ENCODE measurements at regions of chr5 and their contacts with region 1.

Region 1: GRCh38 chr5:59039296-59040023 is 456.6 kb downstream of the RAB3C start:
- DNase-seq: peak; percentile 76
- ATAC-seq: peak; percentile 64
- H3K4me3 ChIP-seq: peak overlapping the region; percentile 99
- H3K27ac ChIP-seq: peak overlapping the region; percentile 98
- H3K4me1 ChIP-seq: peaks cover 9% of the 10 kb centered on the region
- H3K27me3 ChIP-seq: no peaks in the 10 kb centered on the region
- CTCF ChIP-seq: no peak
- POLR2A ChIP-seq: peak; percentile 74
- RAD21 ChIP-seq: peak; percentile 24

Region 2: GRCh38 chr5:58983526-58984452 is 55.7 kb before region 1 on chr5:
- CTCF ChIA-PET with region 1: no interaction called
- POLR2A ChIA-PET with region 1: no interaction called
- dilution Hi-C with region 1: no loop called
- in situ Hi-C with region 1: no loop called
- intact Hi-C with region 1: no loop called
- DNase-seq: peak; percentile 14
- ATAC-seq: no peak
- H3K4me3 ChIP-seq: no peak overlapping the region
- H3K27ac ChIP-seq: no peak overlapping the region
- H3K4me1 ChIP-seq: peaks cover 2% of the 10 kb centered on the region; the same call in 1 of the 2 replicates
- H3K27me3 ChIP-seq: no peaks in the 10 kb centered on the region
- CTCF ChIP-seq: no peak
- POLR2A ChIP-seq: no peak
- RAD21 ChIP-seq: no peak

Region 3: GRCh38 chr5:59062986-59063683 is 23.7 kb after region 1 on chr5:
- CTCF ChIA-PET with region 1: interaction called, 5 read pairs
- POLR2A ChIA-PET with region 1: no interaction called
- dilution Hi-C with region 1: no loop called
- in situ Hi-C with region 1: no loop called
- intact Hi-C with region 1: loop called (anchors 2 kb)
- DNase-seq: no peak
- ATAC-seq: no peak
- H3K4me3 ChIP-seq: no peak overlapping the region
- H3K27ac ChIP-seq: no peak overlapping the region
- H3K4me1 ChIP-seq: peaks cover 14% of the 10 kb centered on the region
- H3K27me3 ChIP-seq: no peaks in the 10 kb centered on the region
- CTCF ChIP-seq: no peak
- POLR2A ChIP-seq: no peak
- RAD21 ChIP-seq: no peak

Region 4: DNA sequence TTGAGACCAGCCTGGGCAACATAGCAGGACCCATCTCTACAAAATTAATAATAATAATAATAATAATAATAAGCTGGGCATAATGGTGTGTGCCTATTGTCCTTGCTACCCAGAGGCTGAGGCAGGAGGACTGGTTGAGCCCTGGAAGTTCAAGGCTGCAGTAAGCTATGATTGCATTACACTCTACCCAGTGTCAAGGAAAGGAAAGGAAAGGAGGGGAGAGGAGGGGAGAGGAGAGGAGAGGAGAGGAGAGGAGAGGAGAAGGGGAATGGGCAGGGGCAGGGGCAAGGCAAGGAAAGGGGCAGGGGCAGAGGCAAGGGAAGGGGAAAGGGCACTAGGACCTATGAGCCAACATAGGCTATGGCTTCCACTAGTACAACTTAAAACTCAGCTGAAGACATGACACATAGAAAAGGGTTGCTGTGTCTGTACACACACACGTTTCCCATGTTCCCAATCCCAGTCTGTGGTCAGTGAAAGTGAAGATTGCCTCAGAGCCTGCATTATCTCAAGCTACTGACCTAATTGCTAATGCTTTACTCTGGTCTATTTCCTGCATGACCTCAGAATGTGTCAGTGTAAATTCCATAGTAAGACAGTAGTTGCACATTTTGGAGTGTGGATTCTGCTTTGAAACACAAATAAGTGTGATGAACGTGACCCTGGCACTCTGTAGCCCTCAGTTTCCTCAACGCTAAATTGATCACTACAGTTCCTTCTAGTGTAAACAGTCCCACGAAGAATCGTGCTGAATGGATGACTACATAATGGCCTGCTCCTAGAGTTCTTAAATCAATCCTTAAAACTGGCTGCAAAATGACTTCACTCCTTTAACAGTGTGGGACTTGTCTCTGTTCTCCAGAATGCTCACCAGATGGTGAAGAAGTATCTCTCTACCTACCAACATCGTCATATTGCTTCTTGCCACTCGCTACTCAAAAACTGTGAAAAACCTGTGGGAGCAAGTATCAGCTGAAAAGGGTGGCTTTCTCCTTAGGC is 40.5 kb after region 1 on chr5:
- CTCF ChIA-PET with region 1: no interaction called
- POLR2A ChIA-PET with region 1: no interaction called
- dilution Hi-C with region 1: no loop called
- in situ Hi-C with region 1: no loop called
- intact Hi-C with region 1: loop called (anchors 5 kb)
- DNase-seq: peak; percentile 100
- ATAC-seq: peak; percentile 98
- H3K4me3 ChIP-seq: no peak overlapping the region
- H3K27ac ChIP-seq: peak overlapping the region; percentile 56
- H3K4me1 ChIP-seq: peaks cover 5% of the 10 kb centered on the region
- H3K27me3 ChIP-seq: no peaks in the 10 kb centered on the region
- CTCF ChIP-seq: no peak
- POLR2A ChIP-seq: no peak; the same call in 1 of the 2 replicates
- RAD21 ChIP-seq: peak; percentile 10

Region 5: DNA sequence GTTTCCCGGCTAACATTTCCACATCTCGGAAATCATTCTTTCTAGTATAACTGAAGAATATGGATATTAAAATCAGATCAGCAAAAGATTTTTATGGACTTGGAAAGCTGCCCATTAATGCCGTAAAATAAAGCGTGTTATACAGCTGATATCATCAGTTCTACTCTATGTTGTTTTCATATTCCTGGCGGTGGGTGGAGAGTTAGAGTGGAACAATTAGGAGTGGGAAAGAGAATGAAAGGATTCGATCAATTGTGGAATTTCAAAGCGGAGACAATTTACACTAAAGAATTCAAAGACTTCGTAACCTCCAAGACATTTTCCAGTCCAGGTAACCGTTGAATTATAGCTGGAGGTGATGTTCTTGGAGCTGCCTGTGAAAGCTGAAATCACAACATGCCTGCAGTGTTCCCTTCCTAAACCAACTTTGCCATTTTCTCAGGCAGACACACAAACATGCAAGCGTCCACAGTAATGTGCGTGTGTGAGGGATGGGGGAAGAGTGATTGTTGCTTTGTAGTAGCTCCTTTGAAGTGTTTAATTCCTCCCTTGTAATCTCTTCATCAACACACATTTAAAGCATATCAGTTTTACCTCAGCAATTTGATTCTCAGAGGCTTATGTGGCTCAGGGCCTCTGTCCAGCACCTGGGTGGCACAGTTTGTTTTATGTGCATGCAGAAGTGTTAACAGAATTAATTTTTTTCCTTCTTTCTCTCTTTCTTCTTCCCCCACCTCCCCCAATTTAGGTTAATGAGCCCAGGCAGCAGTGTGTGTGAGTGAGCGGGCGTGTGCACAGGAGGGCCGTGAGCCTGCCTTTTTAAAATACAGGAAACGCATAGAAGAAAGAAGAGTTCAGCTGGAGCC is 87.5 kb after region 1 on chr5:
- CTCF ChIA-PET with region 1: interaction called, 3 read pairs
- POLR2A ChIA-PET with region 1: interaction called, 3 read pairs
- dilution Hi-C with region 1: no loop called
- in situ Hi-C with region 1: no loop called
- intact Hi-C with region 1: loop called (anchors 1 kb)
- DNase-seq: peak; percentile 55
- ATAC-seq: peak; percentile 1
- H3K4me3 ChIP-seq: no peak overlapping the region
- H3K27ac ChIP-seq: peak overlapping the region; percentile 99
- H3K4me1 ChIP-seq: peaks cover 20% of the 10 kb centered on the region
- H3K27me3 ChIP-seq: no peaks in the 10 kb centered on the region
- CTCF ChIP-seq: no peak
- POLR2A ChIP-seq: no peak; the same call in 1 of the 2 replicates
- RAD21 ChIP-seq: no peak

Region 6: GRCh38 chr5:59164041-59164830 is 124.8 kb after region 1 on chr5:
- CTCF ChIA-PET with region 1: interaction called, 4 read pairs
- POLR2A ChIA-PET with region 1: no interaction called
- dilution Hi-C with region 1: no loop called
- in situ Hi-C with region 1: no loop called
- intact Hi-C with region 1: loop called (anchors 2 kb)
- DNase-seq: peak; percentile 86
- ATAC-seq: peak; percentile 90
- H3K4me3 ChIP-seq: no peak overlapping the region
- H3K27ac ChIP-seq: peak overlapping the region; percentile 97
- H3K4me1 ChIP-seq: peaks cover 4% of the 10 kb centered on the region
- H3K27me3 ChIP-seq: no peaks in the 10 kb centered on the region
- CTCF ChIP-seq: no peak
- POLR2A ChIP-seq: no peak
- RAD21 ChIP-seq: no peak

Region 7: DNA sequence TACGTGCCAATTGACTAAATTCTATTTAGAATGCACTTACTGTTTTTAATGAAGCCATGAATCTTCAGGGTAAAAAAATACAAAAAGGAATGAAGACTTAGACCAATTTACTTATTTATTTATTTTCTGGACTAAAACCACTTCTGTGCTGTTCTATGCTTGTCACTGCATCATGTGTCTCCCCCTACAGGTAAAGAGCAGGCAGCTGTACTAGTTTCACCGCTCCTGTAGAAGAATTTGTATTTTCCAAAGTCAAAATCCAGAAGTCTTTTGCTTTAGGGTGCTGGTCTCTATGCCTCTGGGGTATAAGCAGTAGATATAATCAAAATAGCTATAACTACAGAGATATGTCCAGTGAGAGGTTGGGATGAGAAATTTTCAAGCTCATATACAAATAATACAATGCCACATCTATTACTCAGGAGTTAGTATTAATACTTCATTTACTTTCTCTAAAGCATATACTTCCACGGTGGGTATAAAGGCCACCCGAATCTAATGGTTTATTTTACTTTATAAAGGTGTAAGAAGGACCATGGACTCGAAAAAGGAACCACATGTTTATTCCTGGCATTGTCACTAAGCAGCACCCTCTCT is 134.9 kb after region 1 on chr5:
- CTCF ChIA-PET with region 1: interaction called, 10 read pairs
- POLR2A ChIA-PET with region 1: no interaction called
- dilution Hi-C with region 1: no loop called
- in situ Hi-C with region 1: loop called (anchors 5 kb)
- intact Hi-C with region 1: loop called (anchors 1 kb)
- DNase-seq: peak; percentile 87
- ATAC-seq: peak; percentile 96
- H3K4me3 ChIP-seq: no peak overlapping the region
- H3K27ac ChIP-seq: no peak overlapping the region
- H3K4me1 ChIP-seq: no peaks in the 10 kb centered on the region
- H3K27me3 ChIP-seq: no peaks in the 10 kb centered on the region
- CTCF ChIP-seq: peak; percentile 98
- POLR2A ChIP-seq: peak; percentile 37; the same call in 1 of the 2 replicates
- RAD21 ChIP-seq: peak; percentile 97

Region 8: DNA sequence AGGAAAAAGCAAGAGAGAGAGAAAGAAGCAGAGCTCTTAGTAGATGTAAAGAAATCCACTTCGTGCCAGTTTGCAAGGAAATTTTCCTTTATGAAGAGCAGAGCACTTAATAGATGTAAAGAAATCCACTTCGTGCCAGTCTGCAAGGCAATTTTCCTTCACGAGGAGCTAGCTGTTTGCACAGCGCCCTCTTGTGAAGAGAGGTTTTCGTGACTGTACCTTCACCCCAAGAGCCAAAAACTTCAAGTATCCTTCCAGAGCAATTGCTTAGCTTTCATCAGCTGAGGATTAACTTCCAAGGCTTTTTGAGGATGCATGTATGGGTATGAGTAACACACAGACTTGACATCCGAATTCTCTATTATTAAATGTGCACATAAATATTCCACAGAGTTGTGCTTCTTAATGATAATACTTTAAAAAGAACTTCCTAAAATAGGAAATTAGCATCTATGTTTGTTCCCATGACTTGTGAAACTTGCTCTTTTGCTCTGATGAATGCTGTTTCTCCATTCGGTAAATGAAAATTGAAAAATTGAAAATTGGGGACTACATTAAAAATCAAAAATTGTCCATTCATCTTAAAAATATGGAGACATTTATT is 328.4 kb after region 1 on chr5:
- CTCF ChIA-PET with region 1: interaction called, 3 read pairs
- POLR2A ChIA-PET with region 1: no interaction called
- dilution Hi-C with region 1: no loop called
- in situ Hi-C with region 1: no loop called
- intact Hi-C with region 1: loop called (anchors 5 kb)
- DNase-seq: peak; percentile 66
- ATAC-seq: peak; percentile 70
- H3K4me3 ChIP-seq: no peak overlapping the region
- H3K27ac ChIP-seq: no peak overlapping the region
- H3K4me1 ChIP-seq: no peaks in the 10 kb centered on the region
- H3K27me3 ChIP-seq: peaks cover 15% of the 10 kb centered on the region
- CTCF ChIP-seq: peak; percentile 74
- POLR2A ChIP-seq: no peak
- RAD21 ChIP-seq: peak; percentile 68